Activated CD4-positive, alpha-beta memory T cell treated with anti-CD3 and anti-CD28 coated beads, Interleukin-2, amount 10 ng/mL, durations not matched to agents 7 days and 5 days (primary cell): ENCODE measurements at regions of chr4 and their contacts with region 1.

Region 1: GRCh38 chr4:81471588-81472288 is at the start of gene RASGEF1B:
- DNase-seq: peak; percentile 89
- H3K4me3 Mint-ChIP-seq: peak within 1 kb of the TSS; percentile 85
- H3K27ac Mint-ChIP-seq: peak within 1 kb of the TSS; percentile 69
- H3K4me1 Mint-ChIP-seq: peaks cover 23% of the 10 kb centered on the region
- H3K27me3 Mint-ChIP-seq: peaks cover 12% of the 10 kb centered on the region
- total RNA-seq, gene RASGEF1B: 2.4 to 3.4 TPM

Region 2: DNA sequence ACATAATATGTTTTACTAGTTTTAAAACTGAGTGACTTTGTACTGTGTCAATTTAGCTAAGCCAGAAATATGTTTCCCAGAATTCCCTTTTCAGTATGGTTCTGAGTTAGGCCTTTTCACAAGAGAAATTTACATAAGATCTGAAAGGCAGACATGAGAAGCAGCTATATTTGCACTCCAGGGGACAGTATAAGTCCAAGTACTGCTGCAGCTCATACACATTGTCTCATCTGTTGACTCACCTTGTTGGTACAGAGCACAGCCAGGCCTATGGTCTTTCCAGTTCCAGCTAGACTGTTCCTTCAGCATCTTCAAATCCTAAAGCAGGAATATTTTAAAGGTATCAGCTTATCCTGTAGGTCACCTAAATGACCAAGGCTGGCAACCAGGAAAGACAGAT is 387.7 kb before region 1 on chr4:
- CTCF ChIA-PET with region 1: no interaction called
- POLR2A ChIA-PET with region 1: no interaction called
- DNase-seq: no peak
- H3K4me3 Mint-ChIP-seq: no peak overlapping the region
- H3K27ac Mint-ChIP-seq: no peak overlapping the region
- H3K4me1 Mint-ChIP-seq: no peaks in the 10 kb centered on the region
- H3K27me3 Mint-ChIP-seq: no peaks in the 10 kb centered on the region

Region 3: DNA sequence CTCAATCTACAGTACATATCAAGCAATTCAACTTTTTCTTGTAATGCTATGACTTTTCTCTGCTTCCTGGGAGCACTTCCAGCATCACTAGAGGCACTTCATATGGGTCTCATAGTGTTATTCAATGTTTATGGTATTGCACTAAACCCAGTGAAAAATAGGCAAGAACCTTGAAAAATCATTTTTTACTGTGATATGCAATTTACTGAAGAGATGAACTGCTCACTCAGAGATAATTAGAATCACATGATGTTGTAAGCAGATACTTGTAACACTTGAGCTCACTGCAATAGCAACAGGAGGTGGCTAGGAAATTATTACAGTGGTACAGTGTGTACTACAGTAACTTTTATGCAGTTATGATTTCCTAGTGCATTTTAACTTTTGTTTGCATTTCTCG is 93.4 kb before region 1 on chr4:
- CTCF ChIA-PET with region 1: no interaction called
- POLR2A ChIA-PET with region 1: no interaction called
- DNase-seq: no peak
- H3K4me3 Mint-ChIP-seq: no peak overlapping the region
- H3K27ac Mint-ChIP-seq: no peak overlapping the region
- H3K4me1 Mint-ChIP-seq: no peaks in the 10 kb centered on the region
- H3K27me3 Mint-ChIP-seq: peaks cover 11% of the 10 kb centered on the region

Region 4: GRCh38 chr4:81454499-81454898 is 17.2 kb before region 1 on chr4:
- CTCF ChIA-PET with region 1: interaction called, 12 read pairs
- POLR2A ChIA-PET with region 1: no interaction called
- DNase-seq: peak; percentile 37
- H3K4me3 Mint-ChIP-seq: no peak overlapping the region
- H3K27ac Mint-ChIP-seq: no peak overlapping the region
- H3K4me1 Mint-ChIP-seq: peaks cover 19% of the 10 kb centered on the region
- H3K27me3 Mint-ChIP-seq: no peaks in the 10 kb centered on the region

Region 5: GRCh38 chr4:81491943-81492342 is 20.2 kb after region 1 on chr4:
- CTCF ChIA-PET with region 1: interaction called, 10 read pairs
- POLR2A ChIA-PET with region 1: interaction called, 9 read pairs
- DNase-seq: no peak
- H3K4me3 Mint-ChIP-seq: peak overlapping the region; percentile 9
- H3K27ac Mint-ChIP-seq: peak overlapping the region; percentile 55
- H3K4me1 Mint-ChIP-seq: peaks cover 37% of the 10 kb centered on the region
- H3K27me3 Mint-ChIP-seq: no peaks in the 10 kb centered on the region

Region 6: DNA sequence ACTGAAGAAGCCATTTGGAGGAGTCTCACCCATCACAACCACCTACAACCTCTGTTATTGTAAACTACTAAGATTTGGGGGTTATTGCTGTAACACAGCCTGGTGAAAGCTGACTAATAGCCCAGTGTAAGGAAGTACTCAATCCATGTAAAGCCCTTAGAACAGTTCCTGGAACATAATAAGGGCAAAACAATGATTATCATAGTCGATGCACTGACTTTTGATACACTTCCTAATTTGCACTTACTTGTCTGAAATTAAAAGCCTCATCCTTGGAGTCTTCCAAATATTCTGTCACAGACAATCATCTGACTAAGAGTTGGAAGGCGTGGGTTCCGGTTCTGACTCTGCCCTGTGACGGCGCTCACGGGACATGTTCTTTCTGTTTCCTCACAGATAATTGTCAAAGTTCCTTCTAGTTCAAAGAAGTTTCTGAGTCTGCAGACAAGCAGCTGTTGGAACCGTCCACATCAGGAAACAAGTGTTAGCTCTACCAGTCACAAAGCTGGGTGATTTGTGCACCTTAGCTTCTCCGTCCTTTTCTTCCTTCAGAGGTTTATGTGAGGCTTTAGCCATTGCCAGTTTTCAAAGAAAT is 33.4 kb after region 1 on chr4:
- CTCF ChIA-PET with region 1: interaction called, 4 read pairs
- POLR2A ChIA-PET with region 1: interaction called, 15 read pairs
- DNase-seq: peak; percentile 63
- H3K4me3 Mint-ChIP-seq: peak overlapping the region; percentile 46
- H3K27ac Mint-ChIP-seq: peak overlapping the region; percentile 50
- H3K4me1 Mint-ChIP-seq: peaks cover 26% of the 10 kb centered on the region
- H3K27me3 Mint-ChIP-seq: peaks cover 2% of the 10 kb centered on the region

Region 7: DNA sequence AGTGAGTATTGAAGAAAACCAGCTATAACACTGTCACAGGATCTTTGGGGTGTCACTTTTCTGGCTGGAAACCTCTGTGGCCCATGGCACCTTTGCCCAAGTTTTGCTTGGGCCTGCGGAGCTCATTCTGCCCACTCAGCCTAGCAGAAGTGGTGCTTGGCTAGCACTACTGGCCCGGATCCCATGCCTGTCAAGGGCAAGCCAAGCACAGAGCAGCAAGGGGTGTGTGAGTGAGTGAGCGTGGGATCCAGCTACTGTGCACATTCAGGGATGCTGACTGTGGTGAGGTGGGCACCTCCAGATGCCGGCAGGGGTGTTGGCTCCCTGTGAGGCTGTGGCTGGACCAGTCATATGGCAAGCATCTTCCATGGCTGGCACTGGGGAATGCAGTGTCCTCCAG is 55.4 kb after region 1 on chr4:
- CTCF ChIA-PET with region 1: no interaction called
- POLR2A ChIA-PET with region 1: no interaction called
- DNase-seq: no peak
- H3K4me3 Mint-ChIP-seq: no peak overlapping the region
- H3K27ac Mint-ChIP-seq: no peak overlapping the region
- H3K4me1 Mint-ChIP-seq: no peaks in the 10 kb centered on the region
- H3K27me3 Mint-ChIP-seq: peaks cover 3% of the 10 kb centered on the region

Region 8: DNA sequence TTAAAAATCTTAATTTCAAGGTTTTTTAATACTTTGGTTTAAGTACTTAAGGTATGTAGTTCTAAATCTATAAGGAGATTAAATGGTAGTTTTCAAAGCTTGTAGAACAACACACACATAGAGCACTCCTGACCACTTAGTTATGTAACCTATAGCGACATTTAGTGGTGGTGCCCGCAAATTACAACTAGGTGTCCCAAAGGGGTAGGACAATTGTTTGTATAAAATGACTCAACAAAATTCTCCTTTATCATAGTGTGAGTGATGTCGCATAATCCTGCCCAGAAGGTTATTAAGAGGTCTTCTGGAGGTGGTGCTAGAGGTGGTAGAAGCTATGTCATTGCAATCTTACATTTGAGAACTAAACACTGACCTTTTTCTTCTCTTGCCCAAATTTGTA is 373.0 kb after region 1 on chr4:
- CTCF ChIA-PET with region 1: interaction called, 66 read pairs
- POLR2A ChIA-PET with region 1: interaction called, 4 read pairs
- DNase-seq: peak; percentile 73
- H3K4me3 Mint-ChIP-seq: no peak overlapping the region
- H3K27ac Mint-ChIP-seq: no peak overlapping the region
- H3K4me1 Mint-ChIP-seq: no peaks in the 10 kb centered on the region
- H3K27me3 Mint-ChIP-seq: no peaks in the 10 kb centered on the region